GM12878 (cell line): ENCODE measurements at regions of chr5 and their contacts with region 1.

Region 1: GRCh38 chr5:126972062-126972895 is 58.1 kb downstream of the MARCHF3 start:
- DNase-seq: peak; percentile 76
- ATAC-seq: peak; percentile 83
- H3K4me3 ChIP-seq: no peak overlapping the region
- H3K27ac ChIP-seq: peak overlapping the region; percentile 78
- H3K4me1 ChIP-seq: peaks cover 34% of the 10 kb centered on the region
- H3K27me3 ChIP-seq: no peaks in the 10 kb centered on the region
- CTCF ChIP-seq: no peak
- EP300 ChIP-seq: peak; percentile 54 to 55; a peak in 3 of 4 replicates
- POLR2A ChIP-seq: no peak
- RAD21 ChIP-seq: no peak

Region 2: GRCh38 chr5:126956991-126957390 is 15.3 kb before region 1 on chr5:
- CTCF ChIA-PET with region 1: interaction called, 7 read pairs
- POLR2A ChIA-PET with region 1: interaction called, 6 read pairs
- RAD21 ChIA-PET with region 1: interaction called, 5 read pairs
- SMC1A ChIA-PET with region 1: interaction called, 17 read pairs
- in situ Hi-C with region 1: no loop called
- intact Hi-C with region 1: no loop called
- DNase-seq: no peak
- ATAC-seq: no peak
- H3K4me3 ChIP-seq: no peak overlapping the region
- H3K27ac ChIP-seq: no peak overlapping the region
- H3K4me1 ChIP-seq: no peaks in the 10 kb centered on the region
- H3K27me3 ChIP-seq: no peaks in the 10 kb centered on the region
- CTCF ChIP-seq: no peak
- EP300 ChIP-seq: no peak
- POLR2A ChIP-seq: no peak
- RAD21 ChIP-seq: no peak

Region 3: DNA sequence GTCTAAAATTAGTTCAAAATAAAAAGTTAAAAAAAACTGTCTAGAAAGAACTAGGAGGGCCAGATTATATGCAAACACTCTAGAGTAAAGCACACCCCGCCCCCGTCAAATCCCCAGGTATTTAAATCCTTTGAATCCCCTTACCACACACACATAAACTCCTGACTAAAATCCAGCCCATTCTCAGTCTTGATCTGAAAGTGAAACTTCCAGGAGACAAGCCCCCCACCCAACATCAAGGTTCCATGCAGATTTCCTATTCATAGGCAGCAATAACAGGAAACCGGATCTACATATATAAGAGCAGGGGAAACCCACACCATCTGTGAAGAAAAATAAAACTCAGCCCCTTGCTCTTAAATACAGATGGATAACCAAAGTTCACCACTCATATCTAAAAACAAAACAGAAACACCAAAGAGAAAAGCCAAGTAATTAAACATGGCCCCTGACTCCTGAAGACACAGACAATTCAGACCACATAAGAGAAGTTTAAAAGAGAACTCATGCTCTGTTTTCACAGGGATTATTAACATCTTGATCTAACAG is 15.8 kb after region 1 on chr5:
- CTCF ChIA-PET with region 1: interaction called, 5 read pairs
- POLR2A ChIA-PET with region 1: interaction called, 3 read pairs
- RAD21 ChIA-PET with region 1: interaction called, 4 read pairs
- SMC1A ChIA-PET with region 1: interaction called, 12 read pairs
- in situ Hi-C with region 1: no loop called
- intact Hi-C with region 1: loop called (anchors 1 kb)
- DNase-seq: peak; percentile 79
- ATAC-seq: peak; percentile 93
- H3K4me3 ChIP-seq: peak overlapping the region; percentile 8; the same call in 1 of the 2 replicates
- H3K27ac ChIP-seq: peak overlapping the region; percentile 63
- H3K4me1 ChIP-seq: peaks cover 16% of the 10 kb centered on the region
- H3K27me3 ChIP-seq: no peaks in the 10 kb centered on the region
- CTCF ChIP-seq: no peak
- EP300 ChIP-seq: peak; percentile 57 to 78; a peak in 2 of 4 replicates
- POLR2A ChIP-seq: no peak
- RAD21 ChIP-seq: 0 out of 2 replicates have a peak, but pooled peaks have one; percentile 0

Region 4: DNA sequence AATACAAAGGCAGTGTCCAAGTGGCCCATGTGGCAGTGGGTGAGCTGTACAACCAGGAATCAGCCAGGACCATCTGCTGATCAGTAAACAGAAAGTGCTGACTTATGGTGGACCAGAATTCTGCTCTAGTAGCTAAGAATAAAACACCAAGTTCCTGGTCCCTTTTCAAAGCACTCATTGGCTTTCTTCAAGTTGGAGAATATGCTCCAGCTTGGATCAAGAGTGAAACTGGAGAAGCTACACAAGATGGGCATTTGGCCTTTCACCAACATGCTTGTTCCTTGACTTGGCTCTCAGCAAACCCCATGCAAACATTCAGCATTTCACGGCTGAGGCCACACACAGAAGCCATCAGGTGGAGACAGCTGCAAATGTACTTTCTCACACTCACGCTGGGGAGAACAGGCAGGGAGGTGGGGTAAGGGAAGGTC is 25.9 kb after region 1 on chr5:
- CTCF ChIA-PET with region 1: interaction called, 6 read pairs
- POLR2A ChIA-PET with region 1: interaction called, 5 read pairs
- RAD21 ChIA-PET with region 1: interaction called, 5 read pairs
- SMC1A ChIA-PET with region 1: interaction called, 10 read pairs
- in situ Hi-C with region 1: no loop called
- intact Hi-C with region 1: no loop called
- DNase-seq: peak; percentile 35
- ATAC-seq: peak; percentile 88
- H3K4me3 ChIP-seq: no peak overlapping the region
- H3K27ac ChIP-seq: peak overlapping the region; percentile 46
- H3K4me1 ChIP-seq: peaks cover 5% of the 10 kb centered on the region
- H3K27me3 ChIP-seq: no peaks in the 10 kb centered on the region
- CTCF ChIP-seq: peak in 1 of 3 experiments; percentile 27; a peak in 2 of 6 replicates
- EP300 ChIP-seq: no peak
- POLR2A ChIP-seq: no peak
- RAD21 ChIP-seq: peak; percentile 56

Region 5: GRCh38 chr5:127006744-127007143 is 34.5 kb after region 1 on chr5:
- CTCF ChIA-PET with region 1: interaction called, 5 read pairs
- POLR2A ChIA-PET with region 1: interaction called, 14 read pairs
- RAD21 ChIA-PET with region 1: interaction called, 102 read pairs
- SMC1A ChIA-PET with region 1: interaction called, 102 read pairs
- in situ Hi-C with region 1: no loop called
- intact Hi-C with region 1: no loop called
- DNase-seq: no peak
- ATAC-seq: peak; percentile 21; the same call in 1 of the 3 replicates
- H3K4me3 ChIP-seq: no peak overlapping the region
- H3K27ac ChIP-seq: no peak overlapping the region
- H3K4me1 ChIP-seq: peaks cover 9% of the 10 kb centered on the region; the same call in 1 of the 2 replicates
- H3K27me3 ChIP-seq: no peaks in the 10 kb centered on the region
- CTCF ChIP-seq: no peak
- EP300 ChIP-seq: no peak
- POLR2A ChIP-seq: no peak
- RAD21 ChIP-seq: no peak

Region 6: DNA sequence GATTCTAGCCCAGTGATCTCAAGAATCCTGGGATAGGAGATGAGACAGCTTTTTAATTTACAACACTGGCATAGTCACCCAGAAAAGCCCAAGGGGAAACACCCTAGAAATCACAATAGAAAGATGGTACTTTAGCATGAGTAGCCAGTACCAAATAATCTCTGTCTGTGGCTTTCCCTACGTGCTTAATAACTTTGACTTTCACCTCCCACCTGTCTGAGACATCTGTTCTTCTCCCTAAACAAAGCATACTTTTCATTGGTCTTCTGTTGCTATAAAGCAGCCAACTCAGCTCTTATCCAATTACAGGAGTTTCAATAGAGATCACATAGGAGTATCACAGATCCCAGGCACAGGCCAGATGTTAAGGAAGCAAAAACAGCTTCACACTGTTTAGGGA is 47.6 kb after region 1 on chr5:
- CTCF ChIA-PET with region 1: interaction called, 4 read pairs
- POLR2A ChIA-PET with region 1: interaction called, 4 read pairs
- RAD21 ChIA-PET with region 1: interaction called, 102 read pairs
- SMC1A ChIA-PET with region 1: interaction called, 102 read pairs
- in situ Hi-C with region 1: no loop called
- intact Hi-C with region 1: no loop called
- DNase-seq: no peak
- ATAC-seq: peak; percentile 77
- H3K4me3 ChIP-seq: no peak overlapping the region
- H3K27ac ChIP-seq: no peak overlapping the region
- H3K4me1 ChIP-seq: no peaks in the 10 kb centered on the region
- H3K27me3 ChIP-seq: no peaks in the 10 kb centered on the region
- CTCF ChIP-seq: no peak
- EP300 ChIP-seq: no peak
- POLR2A ChIP-seq: no peak
- RAD21 ChIP-seq: no peak

Region 7: GRCh38 chr5:127025467-127025866 is 53.2 kb after region 1 on chr5:
- CTCF ChIA-PET with region 1: interaction called, 4 read pairs
- POLR2A ChIA-PET with region 1: interaction called, 7 read pairs
- RAD21 ChIA-PET with region 1: interaction called, 28 read pairs
- SMC1A ChIA-PET with region 1: interaction called, 26 read pairs
- in situ Hi-C with region 1: no loop called
- intact Hi-C with region 1: loop called (anchors 2 kb)
- DNase-seq: no peak
- ATAC-seq: no peak
- H3K4me3 ChIP-seq: no peak overlapping the region
- H3K27ac ChIP-seq: no peak overlapping the region
- H3K4me1 ChIP-seq: no peaks in the 10 kb centered on the region
- H3K27me3 ChIP-seq: no peaks in the 10 kb centered on the region
- CTCF ChIP-seq: no peak
- EP300 ChIP-seq: no peak
- POLR2A ChIP-seq: no peak
- RAD21 ChIP-seq: no peak